ENCODE measurements at regions of chr17 and their contacts with region 1.

Region 1: DNA sequence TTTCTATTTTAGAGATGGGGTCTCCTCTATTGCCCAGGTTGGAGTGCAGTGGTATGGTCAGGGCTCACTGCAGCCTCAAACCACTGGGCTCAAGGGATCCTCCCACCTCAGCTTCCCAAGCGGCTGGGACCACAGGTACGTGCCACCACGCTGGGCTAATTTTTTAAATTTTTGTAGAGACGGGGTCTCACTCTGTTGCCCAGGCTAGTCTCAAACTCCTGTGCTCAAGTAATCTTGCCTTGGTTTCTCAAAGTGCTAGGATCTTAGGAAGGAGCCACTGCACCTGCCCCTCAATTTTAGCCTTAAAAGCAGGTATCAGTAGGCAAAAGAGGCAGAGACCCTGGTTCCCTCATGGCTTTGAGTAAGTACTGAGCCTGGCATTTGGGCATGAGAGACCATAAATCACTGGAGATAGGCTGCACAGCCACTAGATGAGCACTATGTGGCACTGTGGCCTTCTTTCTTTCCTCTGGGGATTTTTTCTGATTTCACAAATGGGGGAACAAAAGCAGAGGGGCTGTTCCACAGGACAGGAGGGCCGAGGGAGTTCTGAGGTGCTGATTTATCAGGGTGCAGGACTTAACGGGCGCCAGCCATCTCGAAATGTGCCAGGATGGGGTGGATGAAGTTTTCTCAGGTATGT is 82.2 kb downstream of the PLXDC1 start:
- DNase-seq: peak; percentile 54
- ATAC-seq: peak; percentile 93
- H3K4me3 ChIP-seq: no peak overlapping the region
- H3K27ac ChIP-seq: no peak overlapping the region
- H3K4me1 ChIP-seq: peaks cover 6% of the 10 kb centered on the region
- H3K27me3 ChIP-seq: peaks cover 29% of the 10 kb centered on the region
- CTCF ChIP-seq: peak; percentile 82
- POLR2A ChIP-seq: no peak
- RAD21 ChIP-seq: peak; percentile 78

Region 2: GRCh38 chr17:39094607-39095308 is 25.5 kb after region 1 on chr17:
- CTCF ChIA-PET with region 1: no interaction called
- POLR2A ChIA-PET with region 1: no interaction called
- dilution Hi-C with region 1: no loop called
- in situ Hi-C with region 1: no loop called
- intact Hi-C with region 1: no loop called
- DNase-seq: no peak
- ATAC-seq: no peak
- H3K4me3 ChIP-seq: no peak overlapping the region
- H3K27ac ChIP-seq: no peak overlapping the region
- H3K4me1 ChIP-seq: peaks cover 9% of the 10 kb centered on the region; the same call in 1 of the 2 replicates
- H3K27me3 ChIP-seq: peaks cover 47% of the 10 kb centered on the region
- CTCF ChIP-seq: no peak
- POLR2A ChIP-seq: no peak
- RAD21 ChIP-seq: no peak

Region 3: DNA sequence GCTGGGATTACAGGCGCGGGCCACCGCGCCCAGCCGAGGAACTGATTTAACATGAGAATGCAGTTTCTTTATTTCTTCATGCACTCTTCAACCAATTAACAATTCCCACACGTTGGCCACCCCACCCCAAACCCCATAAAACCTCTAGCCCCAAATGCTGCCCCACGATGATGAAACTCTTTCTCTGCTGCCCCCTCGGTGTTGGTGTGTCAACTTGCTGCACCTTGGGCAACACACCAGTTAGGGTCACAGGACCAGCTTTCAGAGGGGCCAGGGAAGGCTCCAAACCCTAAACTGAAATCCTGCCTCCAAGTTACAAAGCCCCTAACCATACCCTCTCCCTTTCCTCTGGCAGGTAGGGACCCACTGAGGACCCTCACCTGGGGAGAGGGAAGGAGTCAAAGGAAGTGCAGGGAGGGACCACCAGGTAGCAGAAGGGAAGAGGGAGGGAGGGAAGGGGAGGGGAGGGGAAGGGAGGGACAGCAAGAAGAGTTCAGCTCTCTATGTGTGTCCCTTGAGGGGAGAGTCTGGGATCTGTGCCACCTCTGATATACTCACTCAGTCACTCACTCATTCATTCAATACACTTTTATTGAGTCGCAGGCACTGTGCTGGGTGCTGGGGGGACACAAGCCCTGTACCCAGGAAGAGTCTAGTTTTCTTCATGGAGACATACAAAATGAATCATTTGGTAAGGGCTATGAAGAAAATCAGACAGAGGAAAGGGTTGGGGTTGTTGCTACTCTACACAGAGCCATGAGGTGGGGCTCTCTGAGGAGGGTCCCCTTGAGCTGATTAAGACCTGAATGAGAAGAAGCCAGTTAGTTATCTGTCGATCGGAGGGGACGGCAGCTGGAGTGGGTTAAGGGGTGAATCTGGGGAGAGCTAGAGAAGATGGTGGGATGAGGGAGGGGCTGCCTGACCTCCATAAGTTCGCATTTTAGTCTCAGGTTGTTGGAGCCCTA is 78.3 kb after region 1 on chr17:
- CTCF ChIA-PET with region 1: interaction called, 6 read pairs
- POLR2A ChIA-PET with region 1: no interaction called
- dilution Hi-C with region 1: no loop called
- in situ Hi-C with region 1: loop called (anchors 5 kb)
- intact Hi-C with region 1: no loop called
- DNase-seq: no peak
- ATAC-seq: no peak
- H3K4me3 ChIP-seq: no peak overlapping the region
- H3K27ac ChIP-seq: no peak overlapping the region
- H3K4me1 ChIP-seq: peaks cover 4% of the 10 kb centered on the region; the same call in 1 of the 2 replicates
- H3K27me3 ChIP-seq: peaks cover 20% of the 10 kb centered on the region
- CTCF ChIP-seq: no peak
- POLR2A ChIP-seq: no peak
- RAD21 ChIP-seq: no peak

Region 4: GRCh38 chr17:39213852-39214251 is 144.6 kb after region 1 on chr17:
- CTCF ChIA-PET with region 1: no interaction called
- POLR2A ChIA-PET with region 1: no interaction called
- dilution Hi-C with region 1: no loop called
- in situ Hi-C with region 1: no loop called
- intact Hi-C with region 1: no loop called
- DNase-seq: peak; percentile 22
- ATAC-seq: no peak
- H3K4me3 ChIP-seq: no peak overlapping the region
- H3K27ac ChIP-seq: no peak overlapping the region
- H3K4me1 ChIP-seq: peaks cover 10% of the 10 kb centered on the region
- H3K27me3 ChIP-seq: peaks cover 34% of the 10 kb centered on the region
- CTCF ChIP-seq: no peak
- POLR2A ChIP-seq: no peak
- RAD21 ChIP-seq: no peak

Region 5: GRCh38 chr17:39261286-39261685 is 192.1 kb after region 1 on chr17:
- CTCF ChIA-PET with region 1: no interaction called
- POLR2A ChIA-PET with region 1: no interaction called
- dilution Hi-C with region 1: no loop called
- in situ Hi-C with region 1: no loop called
- intact Hi-C with region 1: no loop called
- DNase-seq: no peak
- ATAC-seq: no peak
- H3K4me3 ChIP-seq: no peak overlapping the region
- H3K27ac ChIP-seq: no peak overlapping the region
- H3K4me1 ChIP-seq: no peaks in the 10 kb centered on the region
- H3K27me3 ChIP-seq: no peaks in the 10 kb centered on the region
- CTCF ChIP-seq: no peak
- POLR2A ChIP-seq: no peak
- RAD21 ChIP-seq: no peak

Measured in IMR-90 (cell line).